Prostate gland (tissue), 2 donors: ENCODE measurements at regions of chrX and their contacts with region 1.

Region 1: GRCh38 chrX:77899081-77899828 is at the start of gene COX7B:
- DNase-seq: peak; percentile 82
- H3K4me3 ChIP-seq: peak within 1 kb of the TSS; percentile 43 to 46
- H3K27ac ChIP-seq: peak within 1 kb of the TSS; percentile 83 to 85
- H3K4me1 ChIP-seq: no peaks in the 10 kb centered on the region
- H3K27me3 ChIP-seq: no peaks in the 10 kb centered on the region
- CTCF ChIP-seq: peak in 3 of 4 experiments; percentile 28 to 60 (median 40)
- POLR2A ChIP-seq: peak; percentile 69
- total RNA-seq, gene COX7B: 203 to 374 TPM

Region 2: GRCh38 chrX:77785486-77786364 is 113.5 kb before region 1 on chrX and contains the start of gene ATRX:
- intact Hi-C with region 1: loop called (anchors 10 kb)
- DNase-seq: peak; percentile 64
- H3K4me3 ChIP-seq: peak within 1 kb of the TSS; percentile 45 to 51
- H3K27ac ChIP-seq: peak within 1 kb of the TSS; percentile 91 to 92
- H3K4me1 ChIP-seq: no peaks in the 10 kb centered on the region
- H3K27me3 ChIP-seq: no peaks in the 10 kb centered on the region
- CTCF ChIP-seq: no peak
- POLR2A ChIP-seq: peak; percentile 44
- total RNA-seq, gene ATRX: 49.3 to 110 TPM

Region 3: DNA sequence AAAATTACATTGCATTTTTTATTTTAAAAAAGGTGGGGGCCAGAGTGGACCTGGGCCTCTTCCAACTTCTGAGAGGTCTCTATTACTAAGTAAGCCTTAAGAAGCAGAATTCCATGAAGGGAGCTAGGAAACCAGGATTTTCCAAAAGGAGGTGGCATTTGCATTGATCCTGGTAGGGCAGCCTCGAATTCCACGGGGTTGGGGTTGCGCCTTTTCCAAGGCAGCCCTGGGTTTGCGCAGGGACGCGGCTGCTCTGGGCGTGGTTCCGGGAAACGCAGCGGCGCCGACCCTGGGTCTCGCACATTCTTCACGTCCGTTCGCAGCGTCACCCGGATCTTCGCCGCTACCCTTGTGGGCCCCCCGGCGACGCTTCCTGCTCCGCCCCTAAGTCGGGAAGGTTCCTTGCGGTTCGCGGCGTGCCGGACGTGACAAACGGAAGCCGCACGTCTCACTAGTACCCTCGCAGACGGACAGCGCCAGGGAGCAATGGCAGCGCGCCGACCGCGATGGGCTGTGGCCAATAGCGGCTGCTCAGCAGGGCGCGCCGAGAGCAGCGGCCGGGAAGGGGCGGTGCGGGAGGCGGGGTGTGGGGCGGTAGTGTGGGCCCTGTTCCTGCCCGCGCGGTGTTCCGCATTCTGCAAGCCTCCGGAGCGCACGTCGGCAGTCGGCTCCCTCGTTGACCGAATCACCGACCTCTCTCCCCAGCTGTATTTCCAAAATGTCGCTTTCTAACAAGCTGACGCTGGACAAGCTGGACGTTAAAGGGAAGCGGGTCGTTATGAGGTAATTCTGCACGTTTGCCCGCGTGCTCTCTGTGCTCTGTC is 204.6 kb after region 1 on chrX and contains the start of gene PGK1:
- intact Hi-C with region 1: loop called (anchors 10 kb)
- DNase-seq: peak; percentile 91
- H3K4me3 ChIP-seq: peak within 1 kb of the TSS; percentile 56 to 57
- H3K27ac ChIP-seq: peak within 1 kb of the TSS; percentile 85 to 88
- H3K4me1 ChIP-seq: no peaks in the 10 kb centered on the region
- H3K27me3 ChIP-seq: no peaks in the 10 kb centered on the region
- CTCF ChIP-seq: peak in 1 of 4 experiments; percentile 7
- POLR2A ChIP-seq: peak; percentile 79
- total RNA-seq, gene PGK1: 120 to 146 TPM